Posterior vena cava (tissue), 2 donors: ENCODE measurements at regions of chr1 and their contacts with region 1.

Region 1: DNA sequence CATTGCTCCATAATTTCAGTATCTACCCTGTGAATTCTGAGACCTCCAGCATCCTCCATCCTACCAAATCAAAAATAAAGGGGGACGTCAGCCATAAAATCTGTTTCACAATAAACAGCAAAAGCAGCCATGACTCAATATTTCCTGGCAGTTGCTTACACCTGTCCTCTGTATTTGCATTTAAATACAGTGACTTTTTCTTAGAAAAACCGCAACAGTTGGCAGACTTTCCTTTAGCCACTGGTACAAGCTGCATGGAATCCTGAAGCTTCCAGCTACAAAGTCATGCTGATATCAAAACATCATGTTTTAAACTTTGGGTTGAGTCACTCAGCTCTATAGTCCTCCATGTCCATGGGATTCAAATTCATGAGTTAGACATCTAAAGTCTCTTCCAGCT is 278.0 kb upstream of the KAZN start:
- DNase-seq: no peak

Region 2: GRCh38 chr1:14280932-14281331 is 39.6 kb before region 1 on chr1:
- intact Hi-C with region 1: loop called in 1 of 2 experiments (anchors 1 kb)
- DNase-seq: no peak